Motor neuron (in vitro differentiated cells): ENCODE measurements at regions of chr3 and their contacts with region 1.

Region 1: GRCh38 chr3:76044601-76045600 is 259.6 kb upstream of the ZNF717 start:
- ATAC-seq: peak in 3 of 8 experiments; percentile 46 to 62 (median 58)
- H3K4me3 ChIP-seq: no peak overlapping the region
- H3K27ac ChIP-seq: no peak overlapping the region
- H3K4me1 ChIP-seq: no peaks in the 10 kb centered on the region

Region 2: GRCh38 chr3:75886971-75887526 is 157.9 kb before region 1 on chr3:
- in situ Hi-C with region 1: no loop called
- ATAC-seq: peak in 2 of 8 experiments; percentile 94 to 99
- H3K4me3 ChIP-seq: no peak overlapping the region
- H3K27ac ChIP-seq: no peak overlapping the region
- H3K4me1 ChIP-seq: no peaks in the 10 kb centered on the region

Region 3: GRCh38 chr3:76405196-76405595 is 360.3 kb after region 1 on chr3:
- in situ Hi-C with region 1: no loop called
- ATAC-seq: no peak
- H3K4me3 ChIP-seq: no peak overlapping the region
- H3K27ac ChIP-seq: no peak overlapping the region
- H3K4me1 ChIP-seq: no peaks in the 10 kb centered on the region

Region 4: GRCh38 chr3:76570436-76571057 is 525.6 kb after region 1 on chr3:
- in situ Hi-C with region 1: loop called in 1 of 9 experiments (anchors 25 kb)
- ATAC-seq: no peak
- H3K4me3 ChIP-seq: no peak overlapping the region
- H3K27ac ChIP-seq: no peak overlapping the region
- H3K4me1 ChIP-seq: no peaks in the 10 kb centered on the region